ENCODE measurements at regions of chr19 and their contacts with region 1.

Region 1: GRCh38 chr19:42091742-42092141 is 15.8 kb downstream of the ZNF574 start:
- DNase-seq: no peak
- ATAC-seq: peak in 3 of 4 donors; percentile 41 to 53 (median 51)
- H3K4me3 ChIP-seq: no peak overlapping the region
- H3K27ac ChIP-seq: no peak overlapping the region
- H3K4me1 ChIP-seq: peaks cover 0 to 34% (median 0%) of the 10 kb centered on the region in 12 donors
- H3K27me3 ChIP-seq: peaks cover 0 to 25% (median 12%) of the 10 kb centered on the region in 9 donors
- CTCF ChIP-seq: no peak
- POLR2A ChIP-seq: no peak

Region 2: GRCh38 chr19:41999878-42000208 is 91.9 kb before region 1 on chr19:
- intact Hi-C with region 1: loop called in 1 of 10 experiments (anchors 2 kb)
- DNase-seq: peak in 1 of 5 donors; percentile 18
- ATAC-seq: no peak
- H3K4me3 ChIP-seq: no peak overlapping the region
- H3K27ac ChIP-seq: no peak overlapping the region
- H3K4me1 ChIP-seq: peaks cover 0 to 18% (median 3%) of the 10 kb centered on the region in 12 donors
- H3K27me3 ChIP-seq: peaks cover 7 to 71% (median 18%) of the 10 kb centered on the region in 9 donors
- CTCF ChIP-seq: no peak
- POLR2A ChIP-seq: no peak

Region 3: GRCh38 chr19:42176990-42177685 is 85.4 kb after region 1 on chr19:
- intact Hi-C with region 1: no loop called
- DNase-seq: peak; percentile 59 to 86 (median 73)
- ATAC-seq: peak in 3 of 4 donors; percentile 89 to 97 (median 94)
- H3K4me3 ChIP-seq: peak overlapping the region; percentile 18 to 61 (median 44)
- H3K27ac ChIP-seq: no peak overlapping the region
- H3K4me1 ChIP-seq: peaks cover 0 to 18% (median 8%) of the 10 kb centered on the region in 12 donors
- H3K27me3 ChIP-seq: peaks cover 9 to 76% (median 60%) of the 10 kb centered on the region in 9 donors
- CTCF ChIP-seq: peak in 11 of 12 donors; percentile 14 to 71 (median 34)
- POLR2A ChIP-seq: no peak

Region 4: DNA sequence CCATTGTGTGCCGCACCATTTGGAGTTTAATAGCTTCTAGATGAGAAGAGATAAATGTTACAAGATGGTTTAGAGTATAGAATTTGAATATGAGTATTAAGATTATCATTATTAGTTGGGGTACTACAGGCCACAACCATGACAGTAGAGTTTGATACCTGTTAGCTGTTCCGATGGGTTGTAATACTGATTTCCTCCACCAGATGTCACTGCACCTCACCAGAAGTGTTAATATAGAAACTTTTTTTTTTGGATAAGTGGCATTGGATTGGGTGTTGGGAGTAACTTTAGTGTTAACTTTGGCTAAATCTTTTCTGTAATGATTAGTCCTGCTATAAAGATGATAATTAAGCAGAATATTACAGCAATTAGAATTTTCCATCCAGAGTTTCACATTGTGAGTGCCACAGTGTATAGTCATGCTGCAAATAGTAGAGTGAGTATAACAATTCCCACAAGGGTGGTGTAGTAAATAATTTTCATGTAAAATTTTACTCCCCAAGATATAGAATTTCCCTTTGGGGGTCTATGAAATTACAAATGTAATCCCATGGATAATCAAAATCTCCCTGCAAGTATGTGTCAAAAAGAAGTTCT is 592.3 kb after region 1 on chr19:
- intact Hi-C with region 1: no loop called
- DNase-seq: no peak
- ATAC-seq: no peak
- H3K4me3 ChIP-seq: no peak overlapping the region
- H3K27ac ChIP-seq: no peak overlapping the region
- H3K4me1 ChIP-seq: no peaks in the 10 kb centered on the region
- H3K27me3 ChIP-seq: no peaks in the 10 kb centered on the region
- CTCF ChIP-seq: peak; percentile 14 to 63 (median 44)
- POLR2A ChIP-seq: no peak

Measured in heart left ventricle (tissue), 16 donors.